CD8-positive, alpha-beta T cell (primary cell): ENCODE measurements at regions of chr12 and their contacts with region 1.

Region 1: DNA sequence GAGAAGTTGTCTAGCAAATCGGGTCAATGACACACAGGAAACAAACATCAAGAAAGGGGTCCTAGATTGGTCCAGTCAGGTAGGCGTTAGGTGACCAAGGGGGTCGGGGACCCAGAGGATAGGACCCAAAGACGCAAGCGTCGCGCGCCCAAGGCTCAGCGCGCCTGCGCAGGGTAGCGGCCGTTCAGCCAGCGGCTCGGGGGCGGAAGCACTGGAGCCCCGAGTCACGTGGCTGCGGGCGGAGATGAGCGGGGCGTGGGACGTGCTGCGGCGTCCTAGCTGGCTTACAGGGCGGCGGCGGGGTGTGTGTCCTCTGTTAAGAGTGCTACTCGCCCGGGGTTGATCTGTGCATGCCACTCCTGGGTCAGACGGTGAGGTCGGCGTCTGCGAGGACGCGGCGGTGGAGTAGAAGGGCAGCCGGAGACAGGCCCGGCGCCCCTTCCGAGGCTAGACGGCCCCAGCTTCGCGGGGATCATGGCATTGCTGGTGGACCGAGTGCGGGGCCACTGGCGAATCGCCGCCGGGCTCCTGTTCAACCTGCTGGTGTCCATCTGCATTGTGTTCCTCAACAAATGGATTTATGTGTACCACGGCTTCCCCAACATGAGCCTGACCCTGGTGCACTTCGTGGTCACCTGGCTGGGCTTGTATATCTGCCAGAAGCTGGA is at the start of gene SLC35E3:
- DNase-seq: peak; percentile 83 to 95 (median 90)
- ATAC-seq: peak; percentile 96
- H3K4me3 ChIP-seq: peak within 1 kb of the TSS; percentile 80 to 96
- H3K4me3 Mint-ChIP-seq: peak within 1 kb of the TSS; percentile 98
- H3K27ac ChIP-seq: peak within 1 kb of the TSS; percentile 73 to 76
- H3K27ac Mint-ChIP-seq: peak within 1 kb of the TSS; percentile 97
- H3K4me1 ChIP-seq: peaks cover 21% of the 10 kb centered on the region
- H3K4me1 Mint-ChIP-seq: peaks cover 48% of the 10 kb centered on the region
- H3K27me3 ChIP-seq: no peaks in the 10 kb centered on the region
- H3K27me3 Mint-ChIP-seq: no peaks in the 10 kb centered on the region
- CTCF ChIP-seq: no peak
- total RNA-seq, gene SLC35E3: 4.0 to 5.7 TPM

Region 2: DNA sequence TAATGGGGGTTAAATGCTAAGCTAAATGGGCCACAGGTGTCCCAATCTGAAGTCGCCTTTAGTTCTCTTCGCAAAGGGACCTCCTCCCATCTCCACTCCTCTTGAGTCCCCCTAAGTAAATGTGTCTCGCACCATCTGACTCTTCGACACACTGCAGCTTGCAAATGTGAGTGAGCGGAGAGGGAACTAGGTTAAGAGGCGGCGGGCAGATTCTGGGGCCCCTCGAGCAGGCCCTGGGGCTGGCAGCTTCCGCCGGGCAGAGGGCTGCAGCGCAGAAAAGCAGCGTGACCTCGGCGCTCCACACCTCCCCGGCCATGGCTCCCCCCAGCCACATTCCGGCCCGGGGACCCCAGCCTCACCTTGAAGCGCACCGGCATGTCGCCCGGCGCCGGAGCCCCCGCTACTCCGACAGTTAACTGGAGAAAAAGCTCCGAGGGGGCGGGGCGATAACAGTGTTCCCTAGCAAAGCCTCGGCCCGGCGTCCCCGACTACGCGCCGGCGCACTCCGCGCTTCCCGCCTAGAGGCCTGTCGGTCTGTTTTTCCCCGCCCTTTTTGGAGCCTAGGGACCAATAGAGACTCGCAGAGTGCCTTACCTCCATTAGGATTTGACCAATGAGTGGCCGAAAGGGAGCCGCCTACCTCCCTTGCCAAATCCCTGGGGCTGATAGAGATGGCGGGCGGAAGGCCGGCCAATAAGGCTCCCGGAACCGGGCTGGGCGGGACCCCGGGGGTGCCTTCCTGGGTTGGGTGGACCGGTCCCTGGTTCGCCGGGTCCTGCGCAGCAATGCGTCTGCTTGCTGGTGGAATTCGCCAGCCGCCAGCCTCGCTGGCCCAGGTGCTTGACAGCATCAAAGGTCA is 413.9 kb before region 1 on chr12 and contains the start of gene MDM1:
- CTCF ChIA-PET with region 1: no interaction called
- POLR2A ChIA-PET with region 1: no interaction called
- intact Hi-C with region 1: loop called in 1 of 2 experiments (anchors 1 kb)
- DNase-seq: peak; percentile 88 to 99 (median 96)
- ATAC-seq: peak; percentile 95
- H3K4me3 ChIP-seq: peak within 1 kb of the TSS; percentile 56 to 71
- H3K4me3 Mint-ChIP-seq: peak within 1 kb of the TSS; percentile 88
- H3K27ac ChIP-seq: peak within 1 kb of the TSS; percentile 45 to 46
- H3K27ac Mint-ChIP-seq: peak within 1 kb of the TSS; percentile 89
- H3K4me1 ChIP-seq: peaks cover 24% of the 10 kb centered on the region
- H3K4me1 Mint-ChIP-seq: peaks cover 49% of the 10 kb centered on the region
- H3K27me3 ChIP-seq: no peaks in the 10 kb centered on the region
- H3K27me3 Mint-ChIP-seq: no peaks in the 10 kb centered on the region
- CTCF ChIP-seq: no peak
- total RNA-seq, gene MDM1: 10.6 to 12.0 TPM

Region 3: DNA sequence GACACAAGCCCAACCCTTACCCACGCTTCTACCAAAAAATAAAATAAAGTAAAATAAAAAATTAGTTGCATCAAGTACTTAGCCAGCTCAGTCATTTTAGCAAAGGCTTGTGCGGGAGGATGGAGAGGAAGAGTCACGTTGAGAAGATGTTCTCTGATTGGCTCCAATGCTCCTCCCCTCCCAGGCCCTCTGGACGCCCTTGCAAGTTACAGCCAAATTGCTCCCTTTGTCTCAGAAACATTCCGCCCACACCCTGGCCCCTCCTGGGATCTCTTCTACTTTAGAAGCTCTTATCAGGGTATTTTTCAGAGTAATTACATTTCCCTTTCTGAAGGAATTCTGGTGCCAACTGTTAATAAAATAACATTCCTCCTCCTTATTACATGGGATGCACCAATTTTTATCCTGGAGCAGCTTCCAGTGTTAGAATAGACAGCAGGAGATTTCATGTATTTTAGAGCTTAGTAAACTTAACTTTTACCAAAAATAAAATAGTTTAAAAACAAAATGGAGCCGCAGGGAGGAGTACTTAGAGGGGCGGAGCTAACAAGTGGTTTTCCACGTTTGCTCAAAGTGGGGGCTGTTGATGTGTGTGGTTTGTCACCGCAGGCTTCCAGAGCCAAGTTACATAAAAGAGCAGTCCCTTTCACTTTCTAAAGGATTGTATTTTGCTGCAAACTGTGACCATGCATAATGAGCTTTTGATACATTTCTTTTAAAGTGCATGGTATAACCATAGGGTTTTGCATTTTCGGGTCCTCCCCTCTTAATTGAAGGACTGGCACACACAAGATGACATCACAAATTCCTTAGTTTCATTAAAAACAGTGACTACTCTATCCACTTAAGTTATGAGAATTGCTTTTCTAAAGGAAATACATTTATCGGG is 207.1 kb before region 1 on chr12:
- CTCF ChIA-PET with region 1: no interaction called
- POLR2A ChIA-PET with region 1: no interaction called
- intact Hi-C with region 1: no loop called
- DNase-seq: peak; percentile 34 to 93 (median 66)
- ATAC-seq: peak; percentile 93
- H3K4me3 ChIP-seq: peak overlapping the region in 1 of 2 experiments; percentile 1
- H3K4me3 Mint-ChIP-seq: peak overlapping the region; percentile 67
- H3K27ac ChIP-seq: peak overlapping the region; percentile 9 to 37
- H3K27ac Mint-ChIP-seq: peak overlapping the region; percentile 91
- H3K4me1 ChIP-seq: peaks cover 39% of the 10 kb centered on the region
- H3K4me1 Mint-ChIP-seq: peaks cover 57% of the 10 kb centered on the region
- H3K27me3 ChIP-seq: no peaks in the 10 kb centered on the region
- H3K27me3 Mint-ChIP-seq: no peaks in the 10 kb centered on the region
- CTCF ChIP-seq: no peak

Region 4: GRCh38 chr12:68772714-68773113 is 26.7 kb after region 1 on chr12:
- CTCF ChIA-PET with region 1: no interaction called
- POLR2A ChIA-PET with region 1: no interaction called
- intact Hi-C with region 1: loop called in 1 of 2 experiments (anchors 2 kb)
- DNase-seq: peak in 3 of 9 experiments; percentile 7 to 49 (median 15)
- ATAC-seq: no peak
- H3K4me3 ChIP-seq: peak overlapping the region in 1 of 2 experiments; percentile 2
- H3K4me3 Mint-ChIP-seq: peak overlapping the region; percentile 71
- H3K27ac ChIP-seq: peak overlapping the region in 1 of 2 experiments; percentile 27
- H3K27ac Mint-ChIP-seq: peak overlapping the region; percentile 94
- H3K4me1 ChIP-seq: peaks cover 14% of the 10 kb centered on the region
- H3K4me1 Mint-ChIP-seq: peaks cover 25% of the 10 kb centered on the region
- H3K27me3 ChIP-seq: no peaks in the 10 kb centered on the region
- H3K27me3 Mint-ChIP-seq: no peaks in the 10 kb centered on the region
- CTCF ChIP-seq: no peak